GM12878 (cell line): ENCODE measurements at regions of chr3 and their contacts with region 1.

Region 1: DNA sequence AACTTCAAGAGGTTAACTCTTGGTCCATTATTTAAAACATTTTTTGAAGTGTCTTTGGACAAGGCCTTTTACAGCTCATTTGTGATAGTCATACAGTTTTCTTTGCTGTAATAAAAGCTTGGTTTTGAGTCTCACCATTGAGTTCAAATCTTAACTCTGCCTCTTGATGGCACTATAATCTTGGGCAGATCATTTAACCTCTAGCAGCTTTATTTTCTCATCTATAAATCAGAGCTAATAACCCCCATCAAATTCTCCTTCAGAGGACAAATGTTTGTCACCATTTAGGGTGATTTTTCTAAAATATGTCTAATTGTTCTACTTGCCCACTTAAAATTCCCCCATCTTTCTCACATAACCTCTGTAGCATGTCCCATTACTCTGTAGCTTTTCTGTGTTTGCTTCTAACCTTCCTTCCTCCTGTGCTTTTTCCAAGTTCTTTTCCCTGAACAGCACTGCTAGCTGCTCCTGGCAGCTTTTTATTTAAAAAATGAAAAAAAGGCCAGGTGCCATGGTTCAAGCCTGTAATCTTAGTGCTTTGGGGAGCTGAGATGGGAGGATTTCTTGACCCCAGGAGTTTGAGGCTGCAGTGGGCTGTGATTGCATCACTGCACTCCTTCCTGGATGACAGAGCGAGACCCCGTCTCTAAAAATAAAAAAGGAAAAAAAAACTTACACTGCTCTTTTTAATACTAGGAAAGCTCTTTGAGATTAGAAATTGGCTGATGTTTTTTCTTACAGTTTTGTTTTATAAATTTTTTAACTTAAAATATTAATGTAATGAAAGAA is 28.5 kb downstream of the UBE2E1 start:
- DNase-seq: no peak
- ATAC-seq: no peak
- H3K4me3 ChIP-seq: no peak overlapping the region
- H3K27ac ChIP-seq: no peak overlapping the region
- H3K4me1 ChIP-seq: peaks cover 56% of the 10 kb centered on the region
- H3K27me3 ChIP-seq: no peaks in the 10 kb centered on the region
- CTCF ChIP-seq: peak in 2 of 3 experiments; percentile 36 to 53; a peak in 5 of 6 replicates
- EP300 ChIP-seq: no peak
- POLR2A ChIP-seq: no peak
- RAD21 ChIP-seq: peak; percentile 65

Region 2: GRCh38 chr3:23508464-23508863 is 325.8 kb before region 1 on chr3:
- CTCF ChIA-PET with region 1: no interaction called
- POLR2A ChIA-PET with region 1: no interaction called
- RAD21 ChIA-PET with region 1: no interaction called
- SMC1A ChIA-PET with region 1: no interaction called
- in situ Hi-C with region 1: no loop called
- intact Hi-C with region 1: no loop called
- DNase-seq: no peak
- ATAC-seq: no peak
- H3K4me3 ChIP-seq: no peak overlapping the region
- H3K27ac ChIP-seq: no peak overlapping the region
- H3K4me1 ChIP-seq: no peaks in the 10 kb centered on the region
- H3K27me3 ChIP-seq: no peaks in the 10 kb centered on the region
- CTCF ChIP-seq: no peak
- EP300 ChIP-seq: no peak
- POLR2A ChIP-seq: no peak
- RAD21 ChIP-seq: no peak

Region 3: DNA sequence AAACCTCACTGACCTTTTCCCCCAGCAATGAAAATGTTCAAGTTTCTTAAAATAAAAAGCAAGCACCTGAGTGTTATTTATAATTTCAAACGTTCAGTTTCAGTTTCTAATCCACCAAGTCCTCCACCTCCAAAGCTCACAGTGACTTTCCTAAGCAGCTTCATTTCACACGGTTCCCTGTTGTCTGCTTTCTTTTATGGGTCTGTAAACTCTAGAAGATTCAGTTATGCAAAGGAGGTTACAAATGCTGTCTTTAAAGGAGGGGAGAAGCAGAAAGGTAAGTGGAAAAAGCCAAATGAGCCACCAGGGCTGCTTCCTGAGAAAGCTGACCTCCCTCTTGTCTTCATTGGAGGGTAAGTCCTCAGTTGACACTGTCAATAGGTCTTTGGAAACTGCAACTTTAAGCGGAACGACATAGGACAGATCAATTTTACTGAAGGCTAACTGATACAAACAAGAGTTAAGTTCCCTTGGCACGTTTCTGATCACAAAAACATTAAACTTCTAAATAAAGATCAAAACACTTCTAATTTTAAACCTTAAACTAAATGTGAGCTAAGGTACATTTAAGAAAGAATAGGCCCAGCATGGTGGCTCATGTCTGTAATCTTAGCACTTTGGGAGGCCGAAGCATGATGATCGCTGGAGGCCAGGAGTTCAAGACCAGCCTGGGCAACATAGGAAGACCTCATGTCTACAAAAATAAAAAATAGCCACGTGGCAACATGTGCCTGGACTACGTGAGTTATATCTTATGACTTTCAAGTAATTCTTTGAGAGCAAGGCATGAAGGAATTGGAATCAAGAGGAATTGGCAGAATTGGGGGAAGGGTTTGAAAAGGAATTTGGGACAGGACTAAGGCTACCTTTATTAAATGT is 180.4 kb before region 1 on chr3:
- CTCF ChIA-PET with region 1: interaction called, 9 read pairs
- POLR2A ChIA-PET with region 1: no interaction called
- RAD21 ChIA-PET with region 1: interaction called, 8 read pairs
- SMC1A ChIA-PET with region 1: interaction called, 14 read pairs
- in situ Hi-C with region 1: no loop called
- intact Hi-C with region 1: no loop called
- DNase-seq: peak; percentile 97
- ATAC-seq: peak; percentile 88
- H3K4me3 ChIP-seq: peak overlapping the region; percentile 26; the same call in 1 of the 2 replicates
- H3K27ac ChIP-seq: peak overlapping the region; percentile 88
- H3K4me1 ChIP-seq: peaks cover 48% of the 10 kb centered on the region
- H3K27me3 ChIP-seq: no peaks in the 10 kb centered on the region
- CTCF ChIP-seq: no peak
- EP300 ChIP-seq: peak; percentile 29 to 92; a peak in 3 of 4 replicates
- POLR2A ChIP-seq: no peak
- RAD21 ChIP-seq: peak; percentile 24; the same call in 1 of the 2 replicates

Region 4: GRCh38 chr3:23845326-23846221 is 11.3 kb after region 1 on chr3:
- CTCF ChIA-PET with region 1: interaction called, 94 read pairs
- POLR2A ChIA-PET with region 1: interaction called, 8 read pairs
- RAD21 ChIA-PET with region 1: interaction called, 5 read pairs
- SMC1A ChIA-PET with region 1: interaction called, 171 read pairs
- in situ Hi-C with region 1: no loop called
- intact Hi-C with region 1: no loop called
- DNase-seq: no peak
- ATAC-seq: 0 out of 3 replicates have a peak, but pooled peaks have one; percentile 24
- H3K4me3 ChIP-seq: no peak overlapping the region
- H3K27ac ChIP-seq: no peak overlapping the region
- H3K4me1 ChIP-seq: peaks cover 6% of the 10 kb centered on the region
- H3K27me3 ChIP-seq: no peaks in the 10 kb centered on the region
- CTCF ChIP-seq: no peak
- EP300 ChIP-seq: no peak
- POLR2A ChIP-seq: no peak
- RAD21 ChIP-seq: no peak

Region 5: GRCh38 chr3:23865595-23866450 is 31.5 kb after region 1 on chr3:
- CTCF ChIA-PET with region 1: interaction called, 94 read pairs
- POLR2A ChIA-PET with region 1: interaction called, 5 read pairs
- RAD21 ChIA-PET with region 1: interaction called, 25 read pairs
- SMC1A ChIA-PET with region 1: interaction called, 171 read pairs
- in situ Hi-C with region 1: no loop called
- intact Hi-C with region 1: loop called (anchors 5 kb)
- DNase-seq: peak; percentile 45
- ATAC-seq: peak; percentile 89
- H3K4me3 ChIP-seq: peak overlapping the region; percentile 10; the same call in 1 of the 2 replicates
- H3K27ac ChIP-seq: peak overlapping the region; percentile 63
- H3K4me1 ChIP-seq: peaks cover 22% of the 10 kb centered on the region
- H3K27me3 ChIP-seq: no peaks in the 10 kb centered on the region
- CTCF ChIP-seq: no peak
- EP300 ChIP-seq: peak; percentile 63 to 77; a peak in 2 of 4 replicates
- POLR2A ChIP-seq: no peak
- RAD21 ChIP-seq: no peak

Region 6: DNA sequence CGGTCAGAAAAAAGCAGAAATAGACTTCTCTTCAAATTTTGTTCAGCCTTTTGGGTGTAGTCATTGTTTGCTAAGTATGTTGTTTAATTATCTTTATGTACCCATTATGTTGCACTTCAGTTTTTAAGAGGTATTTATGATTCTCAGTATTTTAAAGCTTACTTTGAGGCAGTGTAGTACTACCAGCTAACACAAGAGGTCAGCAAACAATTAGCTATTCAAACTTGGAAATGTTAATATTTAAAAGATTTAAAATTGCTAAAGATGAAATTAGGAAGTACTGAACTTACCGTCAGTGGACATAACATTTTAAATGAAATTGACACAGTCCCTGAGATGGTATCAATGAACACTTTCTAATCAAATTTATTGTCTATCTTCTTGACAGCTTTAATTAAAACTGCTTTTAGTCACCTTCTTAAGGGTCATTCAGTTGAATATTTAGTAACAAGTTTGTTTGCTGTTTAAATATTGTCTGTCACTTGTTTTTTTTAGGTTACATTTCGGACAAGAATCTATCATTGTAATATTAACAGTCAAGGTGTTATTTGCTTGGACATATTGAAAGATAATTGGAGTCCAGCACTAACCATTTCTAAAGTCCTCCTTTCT is 54.4 kb after region 1 on chr3:
- CTCF ChIA-PET with region 1: interaction called, 103 read pairs
- POLR2A ChIA-PET with region 1: interaction called, 5 read pairs
- RAD21 ChIA-PET with region 1: interaction called, 20 read pairs
- SMC1A ChIA-PET with region 1: interaction called, 36 read pairs
- in situ Hi-C with region 1: no loop called
- intact Hi-C with region 1: no loop called
- DNase-seq: no peak
- ATAC-seq: peak; percentile 56
- H3K4me3 ChIP-seq: no peak overlapping the region
- H3K27ac ChIP-seq: no peak overlapping the region
- H3K4me1 ChIP-seq: no peaks in the 10 kb centered on the region
- H3K27me3 ChIP-seq: no peaks in the 10 kb centered on the region
- CTCF ChIP-seq: peak; percentile 61 to 73 (median 70)
- EP300 ChIP-seq: no peak
- POLR2A ChIP-seq: no peak
- RAD21 ChIP-seq: peak; percentile 78

Region 7: DNA sequence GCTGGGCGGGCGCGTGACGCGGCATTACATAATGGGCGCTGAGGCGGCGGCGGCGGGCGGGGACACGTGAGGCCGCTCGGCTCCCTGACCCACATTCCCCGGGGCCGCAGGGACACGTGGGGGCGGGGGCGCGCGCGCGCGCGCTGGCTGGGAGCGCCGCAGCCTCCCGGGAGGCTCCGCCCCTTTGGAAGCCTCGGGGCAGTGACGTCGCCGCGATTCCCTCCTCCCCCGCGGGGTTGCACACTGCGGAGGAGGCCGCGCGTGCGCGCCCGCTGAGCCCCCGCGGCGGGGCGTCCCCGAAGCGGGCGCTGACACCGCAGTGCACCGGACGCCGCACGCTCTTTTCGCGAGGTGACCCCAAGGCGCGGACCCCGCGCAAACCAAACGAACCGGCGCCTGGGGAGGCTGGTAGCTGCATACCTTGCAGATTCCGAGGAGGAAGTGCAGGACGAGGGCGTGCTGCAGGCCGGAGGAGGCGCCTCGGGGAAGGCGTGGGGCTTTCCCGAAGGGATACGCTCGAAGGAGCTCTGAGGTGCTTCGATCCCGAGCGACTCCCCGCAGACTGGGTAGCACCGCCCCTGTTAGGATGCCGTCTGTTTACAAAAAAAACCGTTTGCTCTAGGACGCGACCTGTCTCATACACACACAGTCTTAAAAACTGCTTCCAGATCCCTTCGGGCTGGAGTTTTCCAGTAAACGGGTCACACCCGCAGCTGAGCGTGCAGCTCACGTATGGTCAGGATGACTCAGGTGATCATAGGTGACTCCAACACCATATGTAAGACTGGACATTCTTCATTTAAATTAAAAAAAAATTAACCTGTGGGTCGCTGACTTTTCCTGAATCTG is 111.9 kb after region 1 on chr3:
- CTCF ChIA-PET with region 1: interaction called, 4 read pairs
- POLR2A ChIA-PET with region 1: interaction called, 3 read pairs
- RAD21 ChIA-PET with region 1: interaction called, 12 read pairs
- SMC1A ChIA-PET with region 1: interaction called, 6 read pairs
- in situ Hi-C with region 1: no loop called
- intact Hi-C with region 1: loop called (anchors 2 kb)
- DNase-seq: peak; percentile 66
- ATAC-seq: peak; percentile 81
- H3K4me3 ChIP-seq: peak overlapping the region; percentile 98
- H3K27ac ChIP-seq: peak overlapping the region; percentile 82
- H3K4me1 ChIP-seq: peaks cover 12% of the 10 kb centered on the region
- H3K27me3 ChIP-seq: peaks cover 0 to 3% of the 10 kb centered on the region in 2 experiments; a peak in 1 of 4 replicates
- CTCF ChIP-seq: no peak
- EP300 ChIP-seq: peak in 1 of 2 experiments; percentile 39; a peak in 1 of 4 replicates
- POLR2A ChIP-seq: peak; percentile 78
- RAD21 ChIP-seq: no peak